ENCODE measurements at regions of chr18 and their contacts with region 1.

Region 1: GRCh38 chr18:62881509-62882016 is 166.2 kb downstream of the PHLPP1 start:
- DNase-seq: peak; percentile 72
- H3K4me3 Mint-ChIP-seq: peak overlapping the region; percentile 45
- H3K27ac Mint-ChIP-seq: peak overlapping the region; percentile 77
- H3K4me1 Mint-ChIP-seq: peaks cover 72% of the 10 kb centered on the region
- H3K27me3 Mint-ChIP-seq: no peaks in the 10 kb centered on the region
- CTCF ChIP-seq: no peak

Region 2: GRCh38 chr18:62781893-62782292 is 99.7 kb before region 1 on chr18:
- CTCF ChIA-PET with region 1: no interaction called
- intact Hi-C with region 1: no loop called
- DNase-seq: no peak
- H3K4me3 Mint-ChIP-seq: no peak overlapping the region
- H3K27ac Mint-ChIP-seq: no peak overlapping the region
- H3K4me1 Mint-ChIP-seq: peaks cover 25% of the 10 kb centered on the region
- H3K27me3 Mint-ChIP-seq: no peaks in the 10 kb centered on the region
- CTCF ChIP-seq: no peak

Region 3: GRCh38 chr18:62832282-62832681 is 49.3 kb before region 1 on chr18:
- CTCF ChIA-PET with region 1: no interaction called
- intact Hi-C with region 1: loop called (anchors 5 kb)
- DNase-seq: no peak
- H3K4me3 Mint-ChIP-seq: peak overlapping the region; percentile 1
- H3K27ac Mint-ChIP-seq: peak overlapping the region; percentile 14
- H3K4me1 Mint-ChIP-seq: peaks cover 54% of the 10 kb centered on the region
- H3K27me3 Mint-ChIP-seq: no peaks in the 10 kb centered on the region
- CTCF ChIP-seq: no peak

Region 4: GRCh38 chr18:62944454-62944853 is 62.9 kb after region 1 on chr18:
- CTCF ChIA-PET with region 1: interaction called, 3 read pairs
- intact Hi-C with region 1: loop called (anchors 5 kb)
- DNase-seq: no peak
- H3K4me3 Mint-ChIP-seq: no peak overlapping the region
- H3K27ac Mint-ChIP-seq: no peak overlapping the region
- H3K4me1 Mint-ChIP-seq: peaks cover 22% of the 10 kb centered on the region
- H3K27me3 Mint-ChIP-seq: no peaks in the 10 kb centered on the region
- CTCF ChIP-seq: no peak

Region 5: DNA sequence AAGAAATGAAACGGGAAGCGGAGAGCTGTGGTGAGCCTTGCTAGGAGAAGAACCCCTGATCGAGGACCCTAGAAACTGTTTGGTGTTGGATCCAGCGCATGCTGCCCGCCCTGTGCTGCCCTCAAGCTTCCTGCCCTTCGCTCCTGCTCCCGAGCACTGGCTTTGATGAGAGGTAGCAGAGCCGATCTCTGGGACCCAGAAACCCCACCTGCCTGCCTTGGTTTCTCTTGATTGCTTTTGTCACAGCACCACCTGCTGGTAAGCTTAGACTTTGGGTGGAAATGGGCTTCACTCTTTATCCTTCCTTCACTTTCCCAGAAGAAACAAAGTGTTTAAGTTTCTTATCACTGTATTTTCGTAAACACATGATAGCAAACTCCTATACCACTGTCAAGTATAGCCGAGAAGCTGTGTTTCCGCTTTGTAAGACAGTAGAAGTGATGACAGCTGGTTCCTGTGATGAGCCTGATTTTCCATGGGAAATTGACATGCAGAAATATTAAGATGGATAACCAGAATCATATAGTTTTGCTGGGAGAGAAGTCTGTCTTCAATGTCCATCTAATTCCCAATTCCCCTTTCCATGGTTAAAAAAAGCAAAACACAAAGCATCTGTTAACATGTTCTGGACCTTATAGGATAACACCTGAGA is 101.2 kb after region 1 on chr18:
- CTCF ChIA-PET with region 1: no interaction called
- intact Hi-C with region 1: loop called (anchors 5 kb)
- DNase-seq: peak; percentile 74
- H3K4me3 Mint-ChIP-seq: no peak overlapping the region
- H3K27ac Mint-ChIP-seq: peak overlapping the region; percentile 27
- H3K4me1 Mint-ChIP-seq: peaks cover 32% of the 10 kb centered on the region
- H3K27me3 Mint-ChIP-seq: no peaks in the 10 kb centered on the region
- CTCF ChIP-seq: peak; percentile 86

Measured in Calu3 (cell line).